HepG2 (cell line): ENCODE measurements at regions of chr3 and their contacts with region 1.

Region 1: GRCh38 chr3:140128631-140129030 is 193.6 kb downstream of the CLSTN2 start:
- DNase-seq: peak; percentile 25
- ATAC-seq: peak; percentile 98
- H3K4me3 ChIP-seq: no peak overlapping the region
- H3K27ac ChIP-seq: no peak overlapping the region
- H3K4me1 ChIP-seq: no peaks in the 10 kb centered on the region
- H3K27me3 ChIP-seq: no peaks in the 10 kb centered on the region
- CTCF ChIP-seq: peak; percentile 78
- EP300 ChIP-seq: no peak
- POLR2A ChIP-seq: no peak
- RAD21 ChIP-seq: peak; percentile 52; the same call in 1 of the 2 replicates

Region 2: DNA sequence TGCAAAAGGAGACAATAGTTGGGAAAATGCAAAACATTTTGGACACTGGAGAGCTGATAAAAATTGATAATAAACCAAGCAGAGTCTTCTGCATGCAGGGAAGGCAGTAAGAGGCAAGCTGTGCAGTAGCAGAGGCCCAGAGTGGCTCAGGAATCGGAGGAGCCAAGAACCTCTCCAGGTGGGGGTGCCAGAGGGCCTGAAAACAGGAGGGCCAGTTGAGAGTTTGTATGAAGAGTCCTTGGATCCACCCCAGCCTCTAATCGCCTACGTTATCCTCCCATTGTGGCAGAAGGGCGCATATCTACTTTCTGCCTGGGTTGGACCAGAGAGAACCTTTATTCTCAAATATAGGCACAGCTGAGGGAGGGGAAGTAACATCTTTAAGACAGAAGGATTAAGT is 540.2 kb before region 1 on chr3:
- CTCF ChIA-PET with region 1: no interaction called
- POLR2A ChIA-PET with region 1: no interaction called
- in situ Hi-C with region 1: no loop called
- intact Hi-C with region 1: no loop called
- DNase-seq: peak; percentile 39
- ATAC-seq: peak; percentile 91
- H3K4me3 ChIP-seq: no peak overlapping the region
- H3K27ac ChIP-seq: no peak overlapping the region
- H3K4me1 ChIP-seq: no peaks in the 10 kb centered on the region
- H3K27me3 ChIP-seq: no peaks in the 10 kb centered on the region
- CTCF ChIP-seq: peak; percentile 59
- EP300 ChIP-seq: no peak
- POLR2A ChIP-seq: no peak
- RAD21 ChIP-seq: peak; percentile 47; the same call in 1 of the 2 replicates

Region 3: DNA sequence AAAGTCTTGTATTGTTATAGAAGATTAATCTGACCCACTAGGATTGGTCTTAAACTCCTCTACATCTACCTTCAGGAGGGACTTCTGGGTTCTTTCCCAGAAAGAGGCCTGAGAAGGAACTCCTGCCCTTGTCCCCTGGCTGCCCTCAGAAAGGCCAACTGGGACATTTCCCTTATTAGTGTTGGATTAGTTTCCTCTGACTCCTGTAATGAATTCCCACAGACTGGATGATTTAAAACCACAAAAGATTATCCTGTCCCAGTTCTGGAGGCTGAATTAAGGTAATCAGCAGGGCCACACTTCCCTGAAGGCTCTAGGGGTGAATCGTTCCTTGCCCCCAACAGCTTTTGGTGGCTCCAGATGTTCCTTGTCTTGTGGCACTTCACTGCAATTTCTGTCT is 348.0 kb before region 1 on chr3:
- CTCF ChIA-PET with region 1: no interaction called
- POLR2A ChIA-PET with region 1: no interaction called
- in situ Hi-C with region 1: no loop called
- intact Hi-C with region 1: no loop called
- DNase-seq: no peak
- ATAC-seq: no peak
- H3K4me3 ChIP-seq: no peak overlapping the region
- H3K27ac ChIP-seq: no peak overlapping the region
- H3K4me1 ChIP-seq: no peaks in the 10 kb centered on the region
- H3K27me3 ChIP-seq: peaks cover 4 to 18% of the 10 kb centered on the region in 2 experiments; a peak in 2 of 5 replicates
- CTCF ChIP-seq: no peak
- EP300 ChIP-seq: no peak
- POLR2A ChIP-seq: no peak
- RAD21 ChIP-seq: no peak

Region 4: DNA sequence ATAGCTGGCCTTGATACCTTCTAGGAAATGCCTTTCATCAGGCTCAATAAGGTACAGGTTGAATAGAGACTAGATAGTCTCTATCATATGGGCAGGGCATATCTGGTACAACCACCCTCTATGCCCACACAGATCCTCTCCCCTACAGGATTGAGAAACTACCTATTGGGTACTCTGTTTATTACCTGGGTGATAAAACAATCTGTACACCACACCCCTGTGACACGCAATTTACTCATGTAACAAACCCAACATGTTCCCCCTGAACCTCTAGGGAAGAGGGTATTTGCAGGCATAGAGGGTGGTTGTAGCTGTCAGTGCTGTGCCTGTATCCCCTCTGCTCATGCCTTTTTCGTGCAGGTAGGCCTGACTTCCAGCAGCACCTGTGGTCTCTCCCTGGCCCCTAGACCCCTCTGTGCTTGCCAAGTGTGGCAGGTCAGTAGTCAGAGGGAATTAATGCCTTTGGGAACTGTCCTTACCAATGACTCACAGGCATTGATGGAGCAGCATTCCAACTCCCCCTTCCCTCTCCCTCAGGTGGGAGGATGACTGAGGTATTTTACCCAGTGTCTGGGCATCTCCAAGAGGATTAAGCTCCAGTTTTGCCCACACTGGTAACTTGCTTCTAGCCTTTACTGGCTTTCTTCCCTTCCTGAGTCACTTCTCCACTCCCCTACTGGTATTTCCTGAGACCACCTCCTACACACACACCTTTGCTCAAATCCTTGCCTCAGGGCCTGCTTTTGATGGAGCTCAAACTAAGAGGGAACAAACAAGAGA is 175.3 kb before region 1 on chr3:
- CTCF ChIA-PET with region 1: no interaction called
- POLR2A ChIA-PET with region 1: no interaction called
- in situ Hi-C with region 1: no loop called
- intact Hi-C with region 1: no loop called
- DNase-seq: no peak
- ATAC-seq: no peak
- H3K4me3 ChIP-seq: no peak overlapping the region
- H3K27ac ChIP-seq: no peak overlapping the region
- H3K4me1 ChIP-seq: no peaks in the 10 kb centered on the region
- H3K27me3 ChIP-seq: peaks cover 0 to 2% of the 10 kb centered on the region in 2 experiments; a peak in 1 of 5 replicates
- CTCF ChIP-seq: no peak
- EP300 ChIP-seq: no peak
- POLR2A ChIP-seq: no peak
- RAD21 ChIP-seq: no peak

Region 5: GRCh38 chr3:140505213-140505612 is 376.6 kb after region 1 on chr3:
- CTCF ChIA-PET with region 1: no interaction called
- POLR2A ChIA-PET with region 1: no interaction called
- in situ Hi-C with region 1: no loop called
- intact Hi-C with region 1: loop called (anchors 10 kb)
- DNase-seq: no peak
- ATAC-seq: no peak
- H3K4me3 ChIP-seq: no peak overlapping the region
- H3K27ac ChIP-seq: no peak overlapping the region
- H3K4me1 ChIP-seq: no peaks in the 10 kb centered on the region
- H3K27me3 ChIP-seq: peaks cover 0 to 4% of the 10 kb centered on the region in 2 experiments; a peak in 1 of 5 replicates
- CTCF ChIP-seq: no peak
- EP300 ChIP-seq: no peak
- POLR2A ChIP-seq: no peak
- RAD21 ChIP-seq: no peak

Region 6: GRCh38 chr3:140863580-140864009 is 735.0 kb after region 1 on chr3:
- CTCF ChIA-PET with region 1: interaction called, 8 read pairs
- POLR2A ChIA-PET with region 1: no interaction called
- in situ Hi-C with region 1: loop called (anchors 25 kb)
- intact Hi-C with region 1: loop called (anchors 1 kb)
- DNase-seq: peak; percentile 49
- ATAC-seq: peak; percentile 82
- H3K4me3 ChIP-seq: no peak overlapping the region
- H3K27ac ChIP-seq: no peak overlapping the region
- H3K4me1 ChIP-seq: no peaks in the 10 kb centered on the region
- H3K27me3 ChIP-seq: peaks cover 0 to 2% of the 10 kb centered on the region in 2 experiments; a peak in 1 of 5 replicates
- CTCF ChIP-seq: peak; percentile 64
- EP300 ChIP-seq: no peak
- POLR2A ChIP-seq: no peak
- RAD21 ChIP-seq: peak; percentile 38; the same call in 1 of the 2 replicates